ENCODE measurements at regions of chr10 and their contacts with region 1.

Region 1: DNA sequence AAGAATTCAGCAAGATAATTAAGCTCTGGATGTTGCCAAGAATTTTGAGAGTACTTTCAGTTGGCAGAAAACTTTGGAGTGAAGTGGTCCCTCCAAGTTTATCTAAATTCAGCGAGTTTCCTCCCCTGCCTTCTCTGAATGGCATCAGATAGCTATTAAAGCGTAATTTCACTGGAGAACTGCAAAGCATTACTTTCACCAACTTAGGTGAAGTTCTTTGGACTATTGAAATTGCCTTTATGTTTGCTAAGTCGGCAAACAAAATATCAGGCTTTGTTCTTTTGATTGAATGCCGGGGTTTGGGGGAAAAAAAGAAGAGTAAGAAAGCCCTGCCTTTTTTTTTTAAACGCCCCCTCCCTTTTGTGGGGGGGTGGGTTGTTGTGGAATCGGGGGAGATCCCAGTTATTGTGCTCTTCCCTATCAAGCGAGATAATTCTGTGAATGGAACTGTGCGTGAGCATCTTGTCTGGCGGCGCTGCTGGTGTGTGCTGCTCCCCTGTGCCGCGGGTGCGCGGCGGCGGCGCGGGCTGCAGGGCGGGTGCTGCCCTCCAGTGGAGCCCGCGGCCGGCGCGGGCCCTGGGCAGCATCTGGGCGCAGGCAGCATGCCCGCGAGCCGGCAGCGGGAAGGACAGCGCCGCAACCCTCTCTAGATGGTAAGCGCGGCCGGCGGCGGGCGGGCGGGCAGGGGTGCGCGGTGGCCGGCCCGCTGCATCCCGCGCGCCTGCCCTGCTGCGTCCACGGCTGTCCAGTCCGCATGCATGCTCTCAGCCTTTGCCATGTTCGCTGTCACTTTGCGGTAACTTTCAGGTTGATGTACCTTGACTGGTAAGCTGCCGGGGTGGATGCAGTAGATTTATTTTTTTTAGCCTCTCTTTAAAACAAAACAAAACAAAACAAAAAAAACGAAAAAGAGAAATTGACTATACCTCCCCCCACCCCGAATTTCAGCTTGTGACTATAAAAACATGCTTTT is 176.5 kb downstream of the TCF7L2 start:
- DNase-seq: peak; percentile 65
- H3K4me3 ChIP-seq: no peak overlapping the region
- H3K27ac ChIP-seq: no peak overlapping the region
- H3K4me1 ChIP-seq: no peaks in the 10 kb centered on the region
- H3K27me3 ChIP-seq: no peaks in the 10 kb centered on the region
- CTCF ChIP-seq: peak; percentile 53

Region 2: GRCh38 chr10:112565434-112566053 is 561.0 kb before region 1 on chr10:
- intact Hi-C with region 1: loop called (anchors 10 kb)
- DNase-seq: peak; percentile 61
- H3K4me3 ChIP-seq: no peak overlapping the region
- H3K27ac ChIP-seq: no peak overlapping the region
- H3K4me1 ChIP-seq: no peaks in the 10 kb centered on the region
- H3K27me3 ChIP-seq: no peaks in the 10 kb centered on the region
- CTCF ChIP-seq: peak; percentile 43

Region 3: GRCh38 chr10:112721080-112721698 is 405.3 kb before region 1 on chr10:
- intact Hi-C with region 1: loop called (anchors 10 kb)
- DNase-seq: peak; percentile 50
- H3K4me3 ChIP-seq: no peak overlapping the region
- H3K27ac ChIP-seq: no peak overlapping the region
- H3K4me1 ChIP-seq: no peaks in the 10 kb centered on the region
- H3K27me3 ChIP-seq: no peaks in the 10 kb centered on the region
- CTCF ChIP-seq: peak; percentile 48

Region 4: DNA sequence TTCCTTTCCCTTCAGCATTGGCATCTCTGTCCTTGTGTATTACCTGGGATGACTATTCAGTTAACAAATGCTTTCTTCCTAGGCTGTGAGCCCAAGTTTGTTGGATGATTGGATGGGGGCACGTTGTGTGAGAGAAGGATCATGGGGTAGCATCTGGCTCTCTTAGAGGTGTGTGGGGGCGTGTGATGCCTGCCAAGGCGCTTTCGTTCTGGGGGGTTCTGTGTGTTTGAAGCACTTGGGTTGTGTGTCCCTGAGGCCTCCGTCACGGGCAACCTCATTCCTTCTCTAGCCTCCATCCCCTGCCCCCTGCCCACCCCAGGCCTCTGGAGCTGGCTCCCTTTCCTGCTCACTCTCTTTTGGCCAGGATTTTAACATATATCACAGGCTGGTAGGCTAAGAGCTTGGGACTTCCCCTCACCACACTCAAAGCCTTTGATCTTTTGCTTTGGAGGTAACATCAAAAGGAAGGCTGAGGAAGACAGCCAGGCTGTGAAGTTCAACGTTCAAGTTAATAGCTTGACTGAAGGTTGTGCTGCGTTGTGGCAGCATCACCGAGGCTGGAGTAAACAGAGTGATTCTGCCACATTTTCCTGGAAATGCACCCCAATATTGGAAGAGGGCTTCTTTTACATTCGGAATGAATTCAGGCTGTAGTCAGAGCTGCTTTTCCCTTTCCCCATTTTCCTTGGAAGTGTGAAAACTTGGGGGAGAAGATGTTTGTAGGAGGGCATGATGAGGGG is 119.3 kb before region 1 on chr10:
- intact Hi-C with region 1: no loop called
- DNase-seq: no peak
- H3K4me3 ChIP-seq: no peak overlapping the region
- H3K27ac ChIP-seq: peak overlapping the region; percentile 19
- H3K4me1 ChIP-seq: peaks cover 4% of the 10 kb centered on the region
- H3K27me3 ChIP-seq: no peaks in the 10 kb centered on the region
- CTCF ChIP-seq: no peak

Region 5: DNA sequence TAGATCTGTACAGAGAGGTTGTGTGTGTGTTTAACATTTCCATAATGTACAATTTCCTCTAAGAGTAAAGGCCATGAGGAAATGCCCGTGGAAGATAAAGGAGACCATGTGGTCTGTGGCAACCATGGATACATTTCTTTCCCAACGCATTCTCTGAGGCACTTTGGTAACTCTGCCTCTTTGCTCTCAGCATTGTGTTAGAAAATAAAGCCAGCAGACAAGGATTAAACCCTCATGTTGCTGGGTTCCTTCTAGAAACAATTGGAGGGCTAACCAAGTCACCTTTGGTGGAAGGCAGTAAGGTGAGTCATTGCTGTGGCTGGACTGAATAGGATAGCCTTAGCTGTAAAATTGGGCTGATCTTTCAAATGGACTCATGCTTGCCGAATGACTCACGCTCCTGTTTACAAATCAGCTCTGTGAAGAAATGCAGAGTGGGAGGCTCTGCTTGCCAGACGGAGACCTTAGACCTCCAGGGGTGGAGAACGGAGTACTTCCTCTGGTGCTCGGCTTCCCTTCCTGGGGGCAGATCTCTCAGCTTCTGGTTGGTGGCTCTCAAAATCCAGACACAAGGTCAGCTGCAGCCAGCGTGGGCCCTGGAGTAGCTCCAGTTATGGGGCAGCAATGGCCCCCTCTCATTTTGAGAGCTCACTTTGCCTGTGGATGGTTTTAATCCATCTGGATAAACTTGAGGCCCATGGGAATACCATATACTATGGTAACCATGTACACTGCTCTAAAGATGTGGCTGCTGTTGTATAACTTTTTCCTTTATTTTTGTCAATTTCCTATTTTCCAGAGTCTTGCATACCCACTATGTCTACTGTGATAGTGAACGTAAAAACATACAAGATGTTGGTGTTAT is 39.1 kb before region 1 on chr10:
- intact Hi-C with region 1: no loop called
- DNase-seq: peak; percentile 86
- H3K4me3 ChIP-seq: no peak overlapping the region
- H3K27ac ChIP-seq: peak overlapping the region; percentile 85
- H3K4me1 ChIP-seq: peaks cover 20% of the 10 kb centered on the region
- H3K27me3 ChIP-seq: no peaks in the 10 kb centered on the region
- CTCF ChIP-seq: no peak

Region 6: GRCh38 chr10:113283189-113283588 is 156.7 kb after region 1 on chr10:
- intact Hi-C with region 1: no loop called
- DNase-seq: no peak
- H3K4me3 ChIP-seq: no peak overlapping the region
- H3K27ac ChIP-seq: no peak overlapping the region
- H3K4me1 ChIP-seq: no peaks in the 10 kb centered on the region
- H3K27me3 ChIP-seq: no peaks in the 10 kb centered on the region
- CTCF ChIP-seq: no peak

Measured in colonic mucosa (tissue), 4 donors.